Activated CD4-positive, alpha-beta T cell treated with anti-CD3 and anti-CD28 coated beads, Interleukin-2, amount 10 ng/mL, durations not matched to agents 7 days and 5 days (primary cell): ENCODE measurements at regions of chr12 and their contacts with region 1.

Region 1: DNA sequence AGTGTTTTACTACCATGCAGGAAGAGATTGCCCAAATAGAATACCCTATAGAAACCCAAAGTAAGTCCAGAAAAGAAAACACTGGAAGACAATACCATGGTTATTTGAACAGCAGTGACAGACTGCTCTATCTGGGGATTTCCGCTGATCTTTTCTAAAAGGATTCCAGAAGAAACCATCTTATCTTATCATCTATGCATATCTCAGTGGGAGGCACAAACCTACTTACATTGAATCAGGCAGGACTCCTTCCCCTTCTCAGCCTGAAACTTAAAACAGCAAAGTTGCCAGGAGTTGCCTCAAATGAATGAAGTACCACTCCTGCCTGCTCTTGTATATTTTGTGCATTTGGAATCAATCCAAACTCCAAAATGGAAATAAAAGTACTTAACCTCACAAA is 56.7 kb upstream of the NR2C1 start:
- DNase-seq: no peak
- H3K4me3 Mint-ChIP-seq: no peak overlapping the region
- H3K27ac Mint-ChIP-seq: no peak overlapping the region
- H3K4me1 Mint-ChIP-seq: no peaks in the 10 kb centered on the region
- H3K27me3 Mint-ChIP-seq: no peaks in the 10 kb centered on the region

Region 2: DNA sequence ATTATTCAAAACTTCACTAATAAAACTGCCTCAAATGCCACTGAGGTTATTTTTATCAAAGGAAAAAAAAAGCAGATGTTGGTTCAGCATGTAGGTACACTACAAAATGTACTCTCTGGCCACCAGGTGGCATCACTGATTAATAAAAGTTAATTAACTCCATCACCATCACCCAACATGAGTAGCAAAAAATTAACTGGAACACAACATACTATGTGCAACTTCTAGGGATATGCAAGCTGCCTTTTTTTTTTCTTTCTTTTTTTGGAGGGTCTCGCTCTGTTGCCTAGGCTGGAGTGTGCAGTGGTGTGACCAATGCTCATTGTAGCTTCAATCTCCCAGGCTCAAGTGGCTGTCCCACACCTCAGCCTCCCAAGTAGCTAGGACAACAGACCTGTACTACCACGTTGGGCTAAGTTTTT is 12.9 kb before region 1 on chr12:
- CTCF ChIA-PET with region 1: no interaction called
- POLR2A ChIA-PET with region 1: no interaction called
- DNase-seq: peak; percentile 79
- H3K4me3 Mint-ChIP-seq: no peak overlapping the region
- H3K27ac Mint-ChIP-seq: no peak overlapping the region
- H3K4me1 Mint-ChIP-seq: peaks cover 7% of the 10 kb centered on the region
- H3K27me3 Mint-ChIP-seq: no peaks in the 10 kb centered on the region

Region 3: DNA sequence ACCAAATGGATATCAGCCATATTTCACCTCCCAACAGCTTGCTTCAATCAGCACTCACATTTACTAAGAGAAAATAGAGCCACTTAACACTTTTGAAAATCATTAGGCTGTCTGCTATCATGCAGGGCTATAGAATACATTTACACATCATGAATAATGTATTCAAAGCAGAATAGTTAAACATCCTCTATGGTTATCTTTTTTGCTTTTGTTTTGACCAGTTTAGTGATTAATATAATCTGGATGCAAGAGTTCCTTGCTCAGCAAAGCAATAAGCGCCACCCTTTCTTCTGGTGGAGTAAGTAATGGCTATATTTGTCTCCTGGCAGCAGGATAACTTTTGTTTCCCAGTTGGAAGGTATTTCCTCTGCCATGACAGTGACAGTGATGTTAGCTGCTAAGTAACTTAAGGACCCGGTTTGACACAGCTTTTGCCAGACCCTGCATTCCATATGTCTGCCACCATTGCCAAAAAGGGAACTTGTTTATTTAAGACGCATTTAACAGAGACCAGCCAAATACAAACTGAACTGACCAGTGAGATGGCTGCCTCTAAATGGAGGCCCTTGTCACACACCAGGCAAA is 13.6 kb after region 1 on chr12:
- CTCF ChIA-PET with region 1: interaction called, 4 read pairs
- POLR2A ChIA-PET with region 1: interaction called, 17 read pairs
- DNase-seq: no peak
- H3K4me3 Mint-ChIP-seq: no peak overlapping the region
- H3K27ac Mint-ChIP-seq: no peak overlapping the region
- H3K4me1 Mint-ChIP-seq: no peaks in the 10 kb centered on the region
- H3K27me3 Mint-ChIP-seq: no peaks in the 10 kb centered on the region